Left lung (tissue), 14 donors: ENCODE measurements at regions of chr9 and their contacts with region 1.

Region 1: GRCh38 chr9:130866474-130866965 is 30.1 kb downstream of the QRFP start:
- DNase-seq: peak in 2 of 4 donors; percentile 49 to 78
- ATAC-seq: peak; percentile 94
- H3K4me3 ChIP-seq: no peak overlapping the region
- H3K27ac ChIP-seq: no peak overlapping the region
- H3K4me1 ChIP-seq: peaks cover 0 to 10% of the 10 kb centered on the region in 2 donors
- H3K27me3 ChIP-seq: no peaks in the 10 kb centered on the region
- CTCF ChIP-seq: peak; percentile 77 to 86

Region 2: DNA sequence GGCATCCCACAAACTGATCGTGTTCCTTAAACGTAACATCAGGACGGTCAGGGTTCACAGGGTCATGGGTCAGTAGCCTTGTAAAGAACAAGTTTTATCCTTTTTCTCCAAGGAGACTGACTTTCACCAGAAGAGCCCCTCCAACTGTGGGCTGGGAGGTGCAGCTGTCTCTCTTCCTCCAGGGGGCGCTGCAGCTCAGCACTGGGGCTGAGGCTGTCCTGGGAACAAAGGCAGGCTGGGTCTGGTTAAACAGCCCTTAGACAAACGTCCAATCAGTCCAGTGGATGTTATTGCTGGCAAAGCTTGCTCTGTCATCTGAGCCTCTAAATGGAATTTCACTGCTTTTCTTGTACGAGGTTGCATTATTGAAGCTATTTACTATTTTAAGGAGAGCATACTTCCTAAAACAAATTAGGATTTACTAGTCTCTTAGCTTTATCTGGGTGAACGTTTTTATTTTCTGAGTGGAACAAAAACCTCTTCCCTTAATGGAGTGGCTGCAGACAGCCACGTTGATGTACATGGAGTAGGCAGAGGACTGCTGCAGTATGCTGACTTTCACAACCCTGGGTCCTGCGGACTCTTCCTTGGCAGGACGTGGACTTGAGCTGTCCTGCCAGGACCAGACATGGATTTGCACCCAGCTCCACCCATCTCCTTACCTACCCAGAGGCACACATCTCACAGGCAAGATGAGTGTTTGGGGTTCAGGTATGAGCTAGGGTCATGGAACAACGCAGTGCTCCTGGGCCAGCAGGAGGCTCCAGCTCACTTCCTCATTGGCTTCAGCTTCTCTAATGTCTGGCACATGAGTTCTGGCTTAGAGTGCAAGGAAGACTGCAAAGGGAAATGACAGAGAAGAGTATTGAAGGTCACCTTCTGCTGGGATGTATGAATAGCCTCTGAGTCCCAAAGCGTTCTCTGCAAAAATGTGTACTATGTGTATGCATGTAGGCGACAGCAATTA is 165.2 kb before region 1 on chr9:
- intact Hi-C with region 1: loop called in 1 of 2 experiments (anchors 5 kb)
- DNase-seq: peak in 3 of 4 donors; percentile 61 to 88 (median 81)
- ATAC-seq: peak; percentile 96
- H3K4me3 ChIP-seq: no peak overlapping the region
- H3K27ac ChIP-seq: no peak overlapping the region
- H3K4me1 ChIP-seq: no peaks in the 10 kb centered on the region
- H3K27me3 ChIP-seq: no peaks in the 10 kb centered on the region
- CTCF ChIP-seq: peak; percentile 88 to 91

Region 3: GRCh38 chr9:130940693-130941576 is 74.4 kb after region 1 on chr9:
- intact Hi-C with region 1: loop called in 1 of 2 experiments (anchors 10 kb)
- DNase-seq: peak in 3 of 4 donors; percentile 62 to 93 (median 78)
- ATAC-seq: peak; percentile 95
- H3K4me3 ChIP-seq: no peak overlapping the region
- H3K27ac ChIP-seq: no peak overlapping the region
- H3K4me1 ChIP-seq: peaks cover 0 to 37% of the 10 kb centered on the region in 2 donors
- H3K27me3 ChIP-seq: peaks cover 37 to 81% of the 10 kb centered on the region in 2 donors
- CTCF ChIP-seq: peak; percentile 71 to 84

Region 4: DNA sequence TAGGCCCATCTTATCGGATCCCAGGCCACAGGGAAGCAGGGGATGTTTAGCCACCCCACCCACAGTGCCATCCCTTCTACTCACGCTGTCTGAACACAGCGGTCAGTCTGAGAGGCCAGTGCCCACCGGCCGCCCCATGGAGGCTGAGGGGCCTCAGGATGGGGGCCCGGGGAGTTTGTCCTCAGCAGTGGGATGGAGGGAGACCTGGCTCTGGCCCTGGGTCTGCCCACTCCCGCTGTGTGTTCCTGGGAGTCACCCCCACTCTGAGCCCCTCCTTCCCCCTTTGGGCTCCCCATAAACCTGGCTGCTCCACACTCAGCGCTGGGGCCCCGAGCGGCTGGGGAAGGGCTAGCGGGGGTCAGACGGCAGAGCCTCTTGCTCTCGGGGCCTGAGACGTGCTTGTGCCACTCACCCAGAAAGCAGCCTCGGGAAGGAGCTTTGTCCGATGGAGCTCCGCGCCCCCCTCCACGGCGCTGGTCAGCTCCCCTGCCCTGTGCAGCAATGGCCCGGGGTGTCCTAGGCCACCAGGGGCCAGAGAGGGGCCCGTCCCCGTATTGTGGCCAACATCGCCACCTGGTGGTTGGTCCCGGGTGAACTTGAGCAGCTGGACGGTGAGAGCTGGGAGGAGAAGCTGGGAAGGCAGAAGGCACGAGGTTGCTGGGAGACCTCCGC is 131.5 kb after region 1 on chr9:
- intact Hi-C with region 1: loop called in 1 of 2 experiments (anchors 5 kb)
- DNase-seq: peak in 2 of 4 donors; percentile 50 to 51
- ATAC-seq: peak; percentile 79
- H3K4me3 ChIP-seq: no peak overlapping the region
- H3K27ac ChIP-seq: no peak overlapping the region
- H3K4me1 ChIP-seq: peaks cover 0 to 11% of the 10 kb centered on the region in 2 donors
- H3K27me3 ChIP-seq: peaks cover 6 to 71% of the 10 kb centered on the region in 2 donors
- CTCF ChIP-seq: peak; percentile 39 to 66

Region 5: DNA sequence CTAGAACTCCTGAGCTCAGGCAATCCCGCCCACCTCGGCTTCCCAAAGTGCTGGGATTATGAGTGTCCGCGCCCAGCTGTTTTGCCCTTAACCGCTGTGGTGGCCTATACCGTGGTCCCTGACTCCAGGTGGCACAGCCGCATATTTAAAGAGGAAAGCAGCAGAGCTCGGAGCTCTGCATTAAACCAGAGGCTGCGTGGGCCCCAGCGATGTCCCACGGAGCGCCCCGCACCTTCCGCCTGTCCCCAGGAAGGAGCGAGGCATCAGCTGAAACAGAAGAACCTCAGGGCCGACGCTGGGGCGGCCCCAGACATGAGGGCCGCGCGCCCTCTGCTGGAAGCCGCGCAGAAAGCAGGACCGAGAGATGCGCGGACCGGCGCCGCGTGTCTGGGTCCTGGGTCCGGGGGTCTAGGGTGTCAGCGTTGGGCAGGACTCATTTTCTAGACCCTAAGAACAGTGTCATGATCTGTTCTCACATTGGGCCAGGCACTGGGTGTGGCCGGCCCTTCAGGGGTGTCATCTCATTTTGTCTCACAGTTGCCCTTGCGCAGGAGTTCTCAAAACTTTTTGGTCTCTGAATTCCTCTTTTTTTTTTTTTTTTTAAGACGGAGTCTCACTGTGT is 180.2 kb after region 1 on chr9:
- intact Hi-C with region 1: loop called in 1 of 2 experiments (anchors 10 kb)
- DNase-seq: peak; percentile 51 to 93 (median 64)
- ATAC-seq: peak; percentile 97
- H3K4me3 ChIP-seq: no peak overlapping the region
- H3K27ac ChIP-seq: no peak overlapping the region
- H3K4me1 ChIP-seq: peaks cover 3 to 7% of the 10 kb centered on the region in 2 donors
- H3K27me3 ChIP-seq: peaks cover 0 to 31% of the 10 kb centered on the region in 2 donors
- CTCF ChIP-seq: peak; percentile 76 to 94